ENCODE measurements at regions of chr2 and their contacts with region 1.

Region 1: DNA sequence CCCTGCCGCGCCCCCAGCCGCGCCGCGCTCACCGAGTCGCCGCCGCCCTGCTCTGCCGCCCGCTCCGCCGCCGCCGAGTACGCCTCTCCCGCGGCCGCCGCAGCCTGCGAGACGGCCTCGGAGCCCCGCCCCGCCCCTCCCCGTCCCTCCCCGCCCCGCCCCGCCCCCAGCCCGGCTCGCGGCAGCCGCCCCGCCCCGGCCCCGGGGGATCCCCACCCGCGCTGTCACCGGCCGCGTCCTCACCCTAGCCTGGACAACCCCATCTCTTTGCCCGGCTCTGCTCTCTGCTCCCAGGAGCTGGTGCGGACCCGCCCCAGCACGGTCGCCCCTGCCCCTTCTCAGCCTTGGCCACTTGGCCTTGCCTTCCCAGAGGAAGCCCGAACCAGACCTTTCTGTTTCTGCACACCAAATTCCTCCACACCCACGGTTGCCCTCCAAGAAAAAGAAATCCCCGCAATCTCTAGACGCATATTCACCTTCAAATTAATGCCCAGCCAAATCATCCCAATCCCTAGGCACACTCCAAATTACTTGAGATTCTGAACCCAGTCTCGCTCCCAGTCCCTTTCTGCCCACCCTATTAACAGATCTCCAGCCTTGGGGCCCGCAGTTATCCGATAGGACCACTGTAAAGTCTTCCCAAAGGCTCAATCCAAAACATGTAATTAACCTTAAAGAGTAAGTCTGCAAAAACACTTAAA is at the start of gene CYRIA:
- DNase-seq: peak; percentile 54
- H3K4me3 Mint-ChIP-seq: peak within 1 kb of the TSS; percentile 86
- H3K27ac Mint-ChIP-seq: peak within 1 kb of the TSS; percentile 82
- H3K4me1 Mint-ChIP-seq: peaks cover 16% of the 10 kb centered on the region
- H3K27me3 Mint-ChIP-seq: peaks cover 22% of the 10 kb centered on the region
- total RNA-seq, gene CYRIA: 0.65 and 0.88 TPM in 2 replicates

Region 2: DNA sequence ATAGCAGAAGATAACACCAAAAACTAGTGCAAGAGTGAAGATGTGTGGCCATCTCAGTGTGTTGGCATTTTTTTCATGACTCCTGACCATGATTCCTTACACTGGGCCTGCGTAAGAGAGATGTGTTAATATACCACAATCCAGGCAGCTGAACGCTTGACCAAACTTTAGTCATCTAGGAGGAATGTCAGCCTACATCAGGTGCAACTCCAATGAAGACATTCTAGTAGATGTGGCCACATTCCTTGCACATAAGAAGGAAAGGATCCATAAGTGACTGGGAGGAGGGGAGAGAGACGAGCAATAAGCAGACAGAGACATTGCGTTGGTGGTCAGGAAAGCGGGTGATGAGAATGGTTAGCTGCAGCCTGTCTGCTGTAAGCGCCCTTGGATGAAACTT is 42.9 kb before region 1 on chr2:
- intact Hi-C with region 1: loop called (anchors 5 kb)
- DNase-seq: no peak
- H3K4me3 Mint-ChIP-seq: no peak overlapping the region
- H3K27ac Mint-ChIP-seq: no peak overlapping the region
- H3K4me1 Mint-ChIP-seq: peaks cover 38% of the 10 kb centered on the region
- H3K27me3 Mint-ChIP-seq: no peaks in the 10 kb centered on the region

Region 3: DNA sequence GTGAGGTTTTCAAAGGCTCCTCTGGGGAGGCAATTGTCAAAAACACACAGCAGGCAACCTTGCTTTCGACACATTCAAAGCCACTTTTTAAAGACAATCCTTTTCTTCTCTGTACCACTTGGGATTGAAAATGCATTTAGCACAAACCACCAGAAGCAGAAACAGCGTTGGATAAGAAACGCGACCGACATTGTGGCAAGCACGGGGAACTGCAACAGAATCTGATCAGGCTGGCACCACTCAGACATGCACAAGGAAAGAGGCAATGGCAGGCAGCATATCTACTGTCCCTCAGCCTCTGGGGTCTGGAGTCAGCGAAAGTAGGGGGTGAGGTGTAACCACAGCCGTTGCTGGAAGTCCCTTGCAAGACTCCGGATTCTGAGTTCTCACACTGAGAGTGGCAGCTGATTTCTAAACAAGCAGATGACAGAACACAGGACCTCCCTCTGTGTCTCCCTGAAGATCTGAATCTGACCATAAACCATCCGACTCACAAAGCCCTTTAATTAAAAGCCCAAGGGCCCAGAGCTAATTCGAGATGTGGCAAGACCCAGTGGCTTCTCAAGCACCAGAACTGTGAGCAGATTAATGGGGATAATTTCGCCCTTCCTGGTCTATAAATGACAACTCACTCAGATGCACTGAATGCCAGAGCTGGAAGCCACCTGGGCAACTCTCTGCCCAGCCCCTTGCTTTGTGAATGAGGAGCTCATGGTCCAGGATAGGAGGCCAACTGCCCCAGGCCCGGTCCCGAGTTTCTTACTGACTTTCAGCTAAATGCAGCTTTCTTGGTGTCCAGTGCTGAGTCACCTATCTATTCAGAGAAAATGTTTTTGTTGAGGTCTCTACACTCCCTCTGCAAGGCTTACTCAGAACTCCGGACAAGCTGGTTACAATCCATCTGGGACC is 29.9 kb before region 1 on chr2:
- intact Hi-C with region 1: no loop called
- DNase-seq: no peak
- H3K4me3 Mint-ChIP-seq: no peak overlapping the region
- H3K27ac Mint-ChIP-seq: no peak overlapping the region
- H3K4me1 Mint-ChIP-seq: peaks cover 32% of the 10 kb centered on the region
- H3K27me3 Mint-ChIP-seq: no peaks in the 10 kb centered on the region

Region 4: GRCh38 chr2:16649353-16650286 is 16.3 kb before region 1 on chr2:
- intact Hi-C with region 1: loop called (anchors 2 kb)
- DNase-seq: no peak
- H3K4me3 Mint-ChIP-seq: no peak overlapping the region
- H3K27ac Mint-ChIP-seq: no peak overlapping the region
- H3K4me1 Mint-ChIP-seq: peaks cover 23% of the 10 kb centered on the region
- H3K27me3 Mint-ChIP-seq: no peaks in the 10 kb centered on the region

Region 5: GRCh38 chr2:16728351-16729136 is 62.6 kb after region 1 on chr2:
- intact Hi-C with region 1: loop called (anchors 2 kb)
- DNase-seq: no peak
- H3K4me3 Mint-ChIP-seq: no peak overlapping the region
- H3K27ac Mint-ChIP-seq: peak overlapping the region; percentile 84
- H3K4me1 Mint-ChIP-seq: peaks cover 22% of the 10 kb centered on the region
- H3K27me3 Mint-ChIP-seq: peaks cover 4% of the 10 kb centered on the region